PC-3 (cell line): ENCODE measurements at regions of chr11 and their contacts with region 1.

Region 1: GRCh38 chr11:10688401-10688800 is 5.2 kb downstream of the IRAG1 start:
- DNase-seq: peak; percentile 72
- ATAC-seq: peak; percentile 33; the same call in 1 of the 2 replicates
- H3K4me3 ChIP-seq: no peak overlapping the region
- H3K27ac ChIP-seq: no peak overlapping the region
- H3K4me1 ChIP-seq: peaks cover 8% of the 10 kb centered on the region; the same call in 1 of the 2 replicates
- H3K27me3 ChIP-seq: no peaks in the 10 kb centered on the region
- CTCF ChIP-seq: peak; percentile 45

Region 2: GRCh38 chr11:10604798-10605197 is 83.6 kb before region 1 on chr11:
- CTCF ChIA-PET with region 1: no interaction called
- POLR2A ChIA-PET with region 1: interaction called, 11 read pairs
- intact Hi-C with region 1: no loop called
- DNase-seq: no peak
- ATAC-seq: no peak
- H3K4me3 ChIP-seq: no peak overlapping the region
- H3K27ac ChIP-seq: no peak overlapping the region
- H3K4me1 ChIP-seq: 0 out of 2 replicates have a peak, but pooled peaks cover 4% of the 10 kb centered on the region
- H3K27me3 ChIP-seq: no peaks in the 10 kb centered on the region
- CTCF ChIP-seq: no peak

Region 3: DNA sequence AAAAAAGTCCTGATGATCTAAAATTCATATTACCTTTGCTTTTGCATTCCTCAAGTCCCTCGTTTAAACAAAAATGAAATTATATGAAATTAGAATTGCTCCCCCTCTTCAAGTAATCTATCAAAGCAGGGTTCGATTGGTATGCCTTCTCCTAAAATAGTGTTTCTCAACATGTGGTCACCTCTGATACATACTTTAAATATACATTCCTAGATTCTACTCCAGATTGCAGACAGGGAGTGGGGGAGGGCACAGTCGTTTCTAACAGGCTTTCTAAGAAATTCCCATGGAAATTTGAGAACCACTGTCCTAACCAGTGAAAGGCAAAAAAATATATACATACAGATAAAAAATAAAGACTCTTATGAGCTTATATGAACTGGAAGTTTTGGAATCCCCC is 27.7 kb after region 1 on chr11:
- CTCF ChIA-PET with region 1: no interaction called
- POLR2A ChIA-PET with region 1: interaction called, 3 read pairs
- intact Hi-C with region 1: loop called (anchors 1 kb)
- DNase-seq: peak; percentile 65
- ATAC-seq: no peak
- H3K4me3 ChIP-seq: no peak overlapping the region
- H3K27ac ChIP-seq: no peak overlapping the region
- H3K4me1 ChIP-seq: peaks cover 13% of the 10 kb centered on the region
- H3K27me3 ChIP-seq: no peaks in the 10 kb centered on the region
- CTCF ChIP-seq: no peak